Mammary epithelial cell (primary cell): ENCODE measurements at regions of chr15 and their contacts with region 1.

Region 1: DNA sequence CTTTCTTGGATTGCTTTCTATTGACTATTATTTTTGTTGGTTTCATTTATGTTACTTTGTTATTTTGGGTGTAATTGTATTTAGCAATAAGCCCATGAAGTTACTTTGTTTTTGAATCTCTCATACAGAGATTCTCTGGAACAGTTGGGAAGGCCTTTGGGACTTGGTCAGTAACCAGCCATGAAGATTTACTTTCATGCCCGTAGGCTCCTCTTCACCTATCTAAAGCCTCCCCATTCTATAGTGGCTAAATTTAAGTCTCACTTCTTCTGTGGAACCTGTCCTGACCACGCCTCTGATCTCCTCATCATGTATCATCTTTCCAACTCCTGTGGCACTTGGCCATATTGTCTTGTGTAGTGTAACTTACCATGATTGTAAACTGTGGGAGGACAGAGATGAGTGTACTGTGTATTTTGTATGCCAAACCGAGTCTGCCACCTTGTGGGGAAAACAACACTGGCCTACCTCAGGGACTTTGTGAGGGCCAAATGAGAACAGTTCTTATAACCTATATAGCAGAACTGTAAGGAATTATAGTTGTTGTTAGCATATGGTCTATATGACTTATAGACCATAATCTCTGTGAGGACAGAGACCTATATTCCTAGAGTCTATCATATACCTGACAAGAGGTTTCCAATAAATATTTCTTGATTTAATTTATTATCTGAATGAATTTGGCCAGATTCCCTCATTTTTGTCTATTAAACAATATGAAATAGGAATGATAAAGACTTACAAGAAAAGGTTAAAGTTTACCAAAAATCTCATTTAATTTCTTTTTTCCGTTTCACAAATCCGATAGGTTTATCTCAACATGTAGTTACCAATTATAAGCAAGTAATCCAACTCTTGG is 75.0 kb downstream of the STARD9 start:
- DNase-seq: peak; percentile 85
- H3K4me3 ChIP-seq: no peak overlapping the region
- H3K27ac ChIP-seq: no peak overlapping the region
- H3K4me1 ChIP-seq: peaks cover 5% of the 10 kb centered on the region
- H3K27me3 ChIP-seq: no peaks in the 10 kb centered on the region
- CTCF ChIP-seq: peak; percentile 88 to 94

Region 2: GRCh38 chr15:42065033-42065432 is 585.4 kb before region 1 on chr15:
- CTCF ChIA-PET with region 1: no interaction called
- dilution Hi-C with region 1: no loop called
- in situ Hi-C with region 1: no loop called
- intact Hi-C with region 1: loop called (anchors 2 kb)
- DNase-seq: no peak
- H3K4me3 ChIP-seq: no peak overlapping the region
- H3K27ac ChIP-seq: no peak overlapping the region
- H3K4me1 ChIP-seq: peaks cover 3% of the 10 kb centered on the region
- H3K27me3 ChIP-seq: no peaks in the 10 kb centered on the region
- CTCF ChIP-seq: no peak

Region 3: GRCh38 chr15:42273102-42273899 is 377.1 kb before region 1 on chr15 and contains the starts of genes GANC and TMEM87A:
- CTCF ChIA-PET with region 1: no interaction called
- dilution Hi-C with region 1: no loop called
- in situ Hi-C with region 1: no loop called
- intact Hi-C with region 1: loop called (anchors 1 kb)
- DNase-seq: peak; percentile 98
- H3K4me3 ChIP-seq: peak within 1 kb of the TSS; percentile 72 to 90 (median 78)
- H3K27ac ChIP-seq: peak within 1 kb of the TSS; percentile 99
- H3K4me1 ChIP-seq: peaks cover 15% of the 10 kb centered on the region
- H3K27me3 ChIP-seq: no peaks in the 10 kb centered on the region
- CTCF ChIP-seq: no peak
- total RNA-seq, gene GANC: 34.0 to 45.7 TPM
- total RNA-seq, gene TMEM87A: 56.3 to 103 TPM

Region 4: GRCh38 chr15:42495361-42496212 is 154.8 kb before region 1 on chr15 and contains the start of gene SNAP23:
- CTCF ChIA-PET with region 1: no interaction called
- dilution Hi-C with region 1: no loop called
- in situ Hi-C with region 1: no loop called
- intact Hi-C with region 1: loop called (anchors 1 kb)
- DNase-seq: peak; percentile 93
- H3K4me3 ChIP-seq: peak within 1 kb of the TSS; percentile 68 to 86 (median 84)
- H3K27ac ChIP-seq: peak within 1 kb of the TSS; percentile 64
- H3K4me1 ChIP-seq: peaks cover 32% of the 10 kb centered on the region
- H3K27me3 ChIP-seq: no peaks in the 10 kb centered on the region
- CTCF ChIP-seq: no peak
- total RNA-seq, gene SNAP23: 40.0 to 45.7 TPM

Region 5: GRCh38 chr15:42548253-42549031 is 102.0 kb before region 1 on chr15 and contains the starts of genes HAUS2 and LRRC57:
- CTCF ChIA-PET with region 1: no interaction called
- dilution Hi-C with region 1: no loop called
- in situ Hi-C with region 1: no loop called
- intact Hi-C with region 1: loop called (anchors 1 kb)
- DNase-seq: peak; percentile 88
- H3K4me3 ChIP-seq: peak within 1 kb of the TSS; percentile 73 to 98 (median 89)
- H3K27ac ChIP-seq: peak within 1 kb of the TSS; percentile 88
- H3K4me1 ChIP-seq: peaks cover 24% of the 10 kb centered on the region
- H3K27me3 ChIP-seq: no peaks in the 10 kb centered on the region
- CTCF ChIP-seq: no peak
- total RNA-seq, gene HAUS2: 25.3 to 34.3 TPM
- total RNA-seq, gene LRRC57: 29.8 to 42.5 TPM

Region 6: GRCh38 chr15:42575188-42576039 is 75.0 kb before region 1 on chr15 and contains the start of gene STARD9:
- CTCF ChIA-PET with region 1: no interaction called
- dilution Hi-C with region 1: no loop called
- in situ Hi-C with region 1: no loop called
- intact Hi-C with region 1: loop called (anchors 1 kb)
- DNase-seq: peak; percentile 98
- H3K4me3 ChIP-seq: peak within 1 kb of the TSS; percentile 58 to 92 (median 62)
- H3K27ac ChIP-seq: peak within 1 kb of the TSS; percentile 49
- H3K4me1 ChIP-seq: peaks cover 15% of the 10 kb centered on the region
- H3K27me3 ChIP-seq: no peaks in the 10 kb centered on the region
- CTCF ChIP-seq: no peak
- total RNA-seq, gene STARD9: 5.8 to 9.0 TPM